Ascending aorta (tissue), 2 donors: ENCODE measurements at regions of chr7 and their contacts with region 1.

Region 1: DNA sequence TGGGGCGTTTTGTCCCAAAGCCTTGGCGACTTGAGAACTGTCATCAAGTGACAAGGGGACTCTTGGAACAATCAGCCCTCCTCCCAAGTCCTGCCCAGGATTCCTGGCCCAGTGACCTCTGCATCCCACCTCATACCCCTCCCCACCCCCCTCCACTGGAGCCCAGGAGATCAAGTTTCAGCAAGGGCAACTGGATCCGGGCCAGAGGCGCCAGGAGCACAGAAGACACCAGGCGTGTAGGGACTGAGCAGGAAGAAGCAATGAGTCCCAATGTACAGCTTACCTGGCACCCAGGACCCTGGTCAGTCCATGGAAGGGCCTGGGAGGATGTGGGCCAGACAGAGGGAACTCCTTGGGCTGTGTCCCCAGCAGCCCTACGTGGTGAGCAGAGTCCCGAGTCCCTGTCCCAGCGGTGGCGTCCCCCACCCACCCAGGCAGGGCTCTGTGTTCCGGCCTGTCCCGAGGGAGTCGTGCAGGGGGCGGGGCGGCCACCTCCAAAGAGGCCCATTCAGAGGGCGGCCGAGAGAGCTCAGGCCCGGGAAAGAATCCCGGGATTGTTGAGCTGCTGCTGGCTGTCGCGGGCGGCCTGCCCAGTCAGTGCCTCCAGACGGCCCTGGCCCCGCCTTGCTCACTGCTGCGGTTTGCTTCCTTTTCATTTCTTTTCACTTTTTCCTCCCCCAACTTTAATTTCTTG is 254.1 kb downstream of the TNS3 start:
- DNase-seq: peak; percentile 65 to 91
- H3K4me3 ChIP-seq: peak overlapping the region; percentile 37 to 50
- H3K27ac ChIP-seq: peak overlapping the region; percentile 86 to 87
- H3K4me1 ChIP-seq: peaks cover 12 to 27% of the 10 kb centered on the region in 2 donors
- H3K27me3 ChIP-seq: no peaks in the 10 kb centered on the region
- CTCF ChIP-seq: no peak

Region 2: DNA sequence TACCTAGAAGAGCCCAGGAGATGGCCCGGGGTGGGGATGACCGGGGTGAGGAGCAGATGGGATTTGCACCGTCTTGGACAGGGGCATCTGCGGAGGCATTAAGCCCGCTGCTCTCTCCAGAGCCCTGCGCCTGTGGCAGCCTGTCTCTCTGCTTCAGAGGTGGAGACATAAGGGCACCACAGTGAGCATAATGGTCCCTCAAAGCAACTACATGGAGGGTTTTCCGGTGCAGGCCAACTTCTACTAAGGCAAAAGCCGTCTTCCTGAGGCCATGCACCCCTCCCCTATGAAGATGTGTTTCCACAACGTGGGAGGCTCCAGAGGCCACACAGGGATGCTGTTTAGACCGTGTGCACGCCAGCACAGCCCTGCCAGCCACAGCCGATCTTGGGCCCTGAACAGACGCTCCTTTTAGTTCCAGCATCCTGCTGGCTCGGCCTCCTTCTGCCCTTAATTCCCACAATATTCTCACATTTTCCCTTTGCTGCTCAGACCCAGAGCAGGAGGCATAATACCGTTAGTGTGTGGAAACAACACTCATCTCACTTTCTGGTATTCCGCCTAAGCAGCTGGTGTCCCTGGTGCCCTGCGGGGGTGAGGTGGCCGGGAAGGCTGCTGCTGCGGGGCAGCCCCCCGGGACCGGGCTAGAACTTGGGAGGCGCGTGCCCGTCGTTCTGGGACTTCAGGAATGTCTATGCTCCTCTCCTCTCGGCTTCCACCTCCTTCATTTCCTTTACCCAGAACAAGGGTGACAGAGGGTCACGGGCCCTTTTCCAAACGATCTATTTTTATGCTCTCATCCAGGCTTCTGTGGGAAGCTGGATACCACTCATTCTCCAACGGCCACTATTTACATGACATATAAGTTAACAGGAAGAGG is 12.9 kb before region 1 on chr7:
- intact Hi-C with region 1: loop called (anchors 1 kb)
- DNase-seq: peak in 1 of 2 donors; percentile 84
- H3K4me3 ChIP-seq: peak overlapping the region; percentile 14 to 55
- H3K27ac ChIP-seq: peak overlapping the region; percentile 76 to 87
- H3K4me1 ChIP-seq: peaks cover 5 to 29% of the 10 kb centered on the region in 2 donors
- H3K27me3 ChIP-seq: no peaks in the 10 kb centered on the region
- CTCF ChIP-seq: no peak

Region 3: DNA sequence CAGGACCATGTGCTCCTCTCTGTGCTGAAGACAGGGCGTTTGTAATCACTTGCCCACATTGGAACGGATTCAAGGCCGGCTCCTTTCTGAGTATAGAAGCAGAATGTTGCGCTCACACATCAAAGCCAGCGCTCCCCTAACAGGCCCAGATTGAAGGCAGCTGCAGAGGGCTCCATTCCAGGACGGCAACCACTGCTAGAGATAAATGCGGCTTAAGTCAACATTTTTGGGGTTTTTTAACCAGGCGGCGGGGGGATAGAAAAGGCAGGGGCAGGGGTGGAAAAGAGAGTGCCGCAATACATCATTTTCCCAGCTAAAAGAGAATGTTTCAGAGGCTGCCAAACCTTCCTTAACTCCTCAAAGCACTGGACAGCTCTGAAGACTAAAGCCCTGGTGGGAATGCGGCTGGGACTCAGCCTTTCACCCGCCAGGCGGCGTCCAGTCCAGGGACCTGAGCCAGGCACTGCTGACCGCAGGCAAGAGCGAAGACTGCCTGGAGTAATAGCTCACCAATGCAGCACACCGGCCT is 64.5 kb after region 1 on chr7:
- intact Hi-C with region 1: no loop called
- DNase-seq: peak in 1 of 2 donors; percentile 84
- H3K4me3 ChIP-seq: peak overlapping the region in 1 of 2 donors; percentile 31
- H3K27ac ChIP-seq: peak overlapping the region in 1 of 2 donors; percentile 32
- H3K4me1 ChIP-seq: peaks cover 0 to 3% of the 10 kb centered on the region in 2 donors
- H3K27me3 ChIP-seq: no peaks in the 10 kb centered on the region
- CTCF ChIP-seq: peak; percentile 46 to 73 (median 63)